ENCODE measurements at regions of chr2 and their contacts with region 1.

Region 1: GRCh38 chr2:79855264-79856006 is 342.6 kb downstream of the CTNNA2 start:
- DNase-seq: peak; percentile 21
- H3K4me3 ChIP-seq: no peak overlapping the region
- H3K27ac ChIP-seq: no peak overlapping the region
- H3K4me1 ChIP-seq: no peaks in the 10 kb centered on the region
- H3K27me3 ChIP-seq: no peaks in the 10 kb centered on the region
- CTCF ChIP-seq: peak; percentile 29

Region 2: GRCh38 chr2:79734512-79734911 is 120.9 kb before region 1 on chr2:
- intact Hi-C with region 1: loop called (anchors 10 kb)
- DNase-seq: no peak
- H3K4me3 ChIP-seq: no peak overlapping the region
- H3K27ac ChIP-seq: no peak overlapping the region
- H3K4me1 ChIP-seq: no peaks in the 10 kb centered on the region
- H3K27me3 ChIP-seq: no peaks in the 10 kb centered on the region
- CTCF ChIP-seq: no peak

Region 3: DNA sequence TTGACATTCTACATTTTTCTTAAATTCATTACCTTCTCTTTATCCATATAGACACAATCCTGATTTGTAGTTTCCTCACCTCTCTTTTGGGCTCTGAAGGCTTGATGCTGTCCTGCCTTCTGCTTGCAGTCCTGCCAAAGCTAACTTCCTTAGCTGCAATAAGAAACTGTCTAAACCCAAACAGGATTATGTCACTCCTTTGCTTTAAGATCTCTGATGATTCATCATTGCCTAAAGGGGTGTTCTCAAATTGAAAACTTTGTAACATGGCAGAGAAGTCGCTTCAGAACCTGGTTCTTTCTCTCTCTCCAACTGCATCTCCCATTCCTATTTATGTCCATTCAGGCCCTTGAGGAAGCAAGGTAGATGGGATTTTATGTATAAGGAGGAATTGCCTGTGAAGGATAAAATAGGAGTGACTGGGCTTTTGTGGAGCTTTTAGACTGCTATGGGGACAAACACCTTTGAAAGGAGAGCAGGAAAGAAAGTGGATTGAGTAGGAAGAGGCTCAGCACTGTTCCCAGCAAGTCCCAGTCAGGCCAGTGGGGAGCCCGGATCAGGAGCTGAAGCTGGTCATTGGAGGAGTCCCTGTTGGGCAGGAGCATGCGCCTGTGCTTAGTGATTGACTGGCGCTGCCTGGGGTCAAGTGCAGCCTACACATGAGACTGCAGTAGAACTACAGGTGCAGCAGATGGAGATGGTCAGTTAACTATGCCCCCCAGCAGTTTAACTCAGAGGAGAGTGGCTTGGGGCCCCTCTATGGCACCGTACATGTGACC is 48.0 kb after region 1 on chr2:
- intact Hi-C with region 1: no loop called
- DNase-seq: no peak
- H3K4me3 ChIP-seq: no peak overlapping the region
- H3K27ac ChIP-seq: no peak overlapping the region
- H3K4me1 ChIP-seq: no peaks in the 10 kb centered on the region
- H3K27me3 ChIP-seq: no peaks in the 10 kb centered on the region
- CTCF ChIP-seq: no peak